Activated T-helper 2 cell treated with anti-CD3 and anti-CD28 coated beads, Interferon-gamma antibody, Interleukin-2, Interleukin-4, amounts not matched to agents 10 μg/mL and 5 μg/mL and 100 μg/mL, durations not matched to agents 14 hours and 24 hours and 36 hours (primary cell): ENCODE measurements at regions of chr1 and their contacts with region 1.

Region 1: GRCh38 chr1:150629115-150629928 is at the start of gene ENSA:
- DNase-seq: peak; percentile 96
- H3K4me3 Mint-ChIP-seq: no peak within 1 kb of the TSS
- H3K27ac Mint-ChIP-seq: no peak within 1 kb of the TSS
- H3K4me1 Mint-ChIP-seq: peaks cover 41% of the 10 kb centered on the region
- H3K27me3 Mint-ChIP-seq: no peaks in the 10 kb centered on the region
- total RNA-seq, gene ENSA: 252 and 253 TPM in 2 replicates

Region 2: GRCh38 chr1:150578965-150579798 is 50.1 kb before region 1 on chr1 and contains the start of gene MCL1:
- intact Hi-C with region 1: loop called (anchors 1 kb)
- DNase-seq: peak; percentile 89
- H3K4me3 Mint-ChIP-seq: peak within 1 kb of the TSS; percentile 98
- H3K27ac Mint-ChIP-seq: peak within 1 kb of the TSS; percentile 98
- H3K4me1 Mint-ChIP-seq: peaks cover 30% of the 10 kb centered on the region
- H3K27me3 Mint-ChIP-seq: no peaks in the 10 kb centered on the region
- total RNA-seq, gene MCL1: 217 and 221 TPM in 2 replicates

Region 3: GRCh38 chr1:150613061-150613920 is 16.0 kb before region 1 on chr1:
- intact Hi-C with region 1: loop called (anchors 1 kb)
- DNase-seq: peak; percentile 32
- H3K4me3 Mint-ChIP-seq: peak overlapping the region; percentile 23
- H3K27ac Mint-ChIP-seq: peak overlapping the region; percentile 90
- H3K4me1 Mint-ChIP-seq: peaks cover 56% of the 10 kb centered on the region
- H3K27me3 Mint-ChIP-seq: no peaks in the 10 kb centered on the region

Region 4: DNA sequence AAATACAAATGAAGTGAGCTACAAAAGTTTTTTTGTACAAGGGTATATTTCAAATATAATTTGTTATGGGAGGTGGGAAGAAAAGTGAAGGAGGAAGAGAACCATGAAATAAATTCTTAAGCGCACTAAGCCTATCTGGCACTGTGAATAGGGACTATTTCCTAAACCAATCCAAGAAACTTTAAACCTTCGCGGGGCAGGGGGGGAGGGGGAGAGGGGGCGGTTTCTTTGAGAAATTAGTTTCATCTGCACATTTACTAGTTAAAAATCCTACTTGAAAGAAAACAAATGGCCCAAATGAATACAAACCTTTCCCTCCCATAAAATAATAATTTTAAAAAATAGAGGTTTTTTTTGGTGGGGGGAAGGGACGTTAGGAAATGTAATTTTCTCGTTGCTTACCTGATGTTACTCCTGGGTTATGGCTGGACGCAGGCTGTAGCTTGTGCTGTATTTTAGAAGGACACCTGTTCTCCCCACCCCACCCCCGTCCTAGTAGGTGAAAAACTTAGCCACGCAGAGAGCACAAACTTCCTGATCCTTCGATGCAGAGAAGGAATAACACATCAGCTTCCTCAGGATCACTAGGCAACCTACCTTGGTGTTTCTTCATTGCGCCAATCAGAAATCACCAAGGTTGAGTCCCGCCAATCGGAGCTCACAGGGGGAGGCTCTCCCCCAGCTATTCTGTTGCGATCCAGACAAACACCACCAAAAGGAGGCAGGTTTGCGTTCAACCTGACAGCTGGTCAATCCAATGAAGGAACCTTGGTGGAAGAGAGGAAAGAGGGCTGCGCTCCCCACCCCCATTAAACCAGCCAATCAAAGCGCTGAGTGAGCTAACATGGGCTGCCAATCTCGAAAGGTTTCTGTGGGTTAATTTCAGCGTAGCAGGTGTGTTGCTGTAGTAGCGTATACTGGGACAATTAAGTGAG is 67.5 kb after region 1 on chr1 and contains the start of gene GOLPH3L:
- intact Hi-C with region 1: loop called (anchors 2 kb)
- DNase-seq: peak; percentile 91
- H3K4me3 Mint-ChIP-seq: peak within 1 kb of the TSS; percentile 96
- H3K27ac Mint-ChIP-seq: peak within 1 kb of the TSS; percentile 88
- H3K4me1 Mint-ChIP-seq: peaks cover 17% of the 10 kb centered on the region
- H3K27me3 Mint-ChIP-seq: peaks cover 9% of the 10 kb centered on the region
- total RNA-seq, gene GOLPH3L: 21.3 and 22.4 TPM in 2 replicates